ENCODE measurements at regions of chrX and their contacts with region 1.

Region 1: GRCh38 chrX:145910017-145910416 is 92.4 kb downstream of the SLITRK2 start:
- DNase-seq: peak in 1 of 10 donors; percentile 9

Region 2: GRCh38 chrX:145654486-145654885 is 255.5 kb before region 1 on chrX:
- intact Hi-C with region 1: loop called (anchors 10 kb)
- DNase-seq: no peak

Region 3: DNA sequence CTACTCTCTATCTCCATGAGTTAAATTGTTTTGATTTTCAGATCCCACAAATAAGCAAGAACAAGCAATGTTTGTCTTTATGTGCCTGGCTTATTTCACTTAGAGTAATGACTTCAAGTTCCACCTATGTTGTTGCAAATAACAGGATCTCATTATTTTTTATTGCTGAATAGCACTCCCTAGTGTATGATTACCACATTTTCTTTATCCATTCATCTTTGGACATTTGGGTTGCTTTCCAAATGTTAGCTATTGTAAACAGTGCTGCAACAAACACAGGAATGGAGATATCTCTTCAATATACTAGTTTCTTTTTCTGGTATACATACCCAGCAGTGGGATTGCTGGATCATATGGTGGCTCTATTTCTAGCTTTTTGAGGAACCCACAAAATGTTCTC is 43.6 kb after region 1 on chrX:
- intact Hi-C with region 1: no loop called
- DNase-seq: no peak